Head of caudate nucleus (tissue), 42 donors: ENCODE measurements at regions of chr3 and their contacts with region 1.

Region 1: GRCh38 chr3:66407611-66408218 is 93.1 kb downstream of the LRIG1 start:
- DNase-seq: peak in 41 of 42 donors; percentile 65 to 92 (median 80)

Region 2: GRCh38 chr3:66472313-66473134 is 64.8 kb after region 1 on chr3:
- intact Hi-C with region 1: no loop called
- DNase-seq: no peak

Region 3: DNA sequence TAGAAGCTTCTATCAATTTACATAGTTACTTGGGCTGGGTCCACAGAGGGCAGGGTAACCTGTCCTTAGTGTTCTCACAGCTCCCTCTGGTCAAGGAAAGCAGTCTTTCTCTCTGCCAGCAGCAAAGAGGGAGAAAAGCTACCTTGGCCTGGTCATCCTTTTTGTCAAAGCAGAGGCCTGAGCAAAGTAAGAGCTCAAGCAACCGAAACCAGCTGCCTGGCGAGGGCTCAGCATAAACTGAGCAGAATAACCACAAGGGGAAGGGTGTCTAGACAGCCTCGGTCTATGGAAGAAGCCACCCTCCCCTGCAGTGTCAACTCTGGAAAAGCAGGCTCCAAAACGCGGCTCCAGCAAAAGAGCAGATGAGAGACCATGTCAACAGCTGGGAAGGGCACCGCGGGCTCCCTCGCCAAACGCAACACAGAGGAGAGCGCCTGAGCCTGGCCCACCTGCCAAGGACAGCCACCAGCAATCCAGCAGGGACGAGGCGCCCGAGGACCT is 75.7 kb after region 1 on chr3:
- intact Hi-C with region 1: loop called (anchors 5 kb)
- DNase-seq: peak in 37 of 42 donors; percentile 11 to 74 (median 41)

Region 4: GRCh38 chr3:66500576-66501482 is 93.1 kb after region 1 on chr3 and contains the start of gene LRIG1:
- intact Hi-C with region 1: loop called (anchors 2 kb)
- DNase-seq: peak; percentile 98 to 100 (median 99)

Region 5: GRCh38 chr3:66816090-66816761 is 408.5 kb after region 1 on chr3:
- intact Hi-C with region 1: loop called (anchors 5 kb)
- DNase-seq: peak in 2 of 42 donors; percentile 18 to 32